ENCODE measurements at regions of chr1 and their contacts with region 1.

Region 1: GRCh38 chr1:177432897-177433296 is 262.1 kb downstream of the BRINP2 start:
- DNase-seq: no peak
- H3K4me3 ChIP-seq: no peak overlapping the region
- H3K27ac ChIP-seq: no peak overlapping the region
- H3K4me1 ChIP-seq: no peaks in the 10 kb centered on the region
- H3K27me3 ChIP-seq: no peaks in the 10 kb centered on the region
- CTCF ChIP-seq: no peak
- EP300 ChIP-seq: no peak
- POLR2A ChIP-seq: no peak

Region 2: DNA sequence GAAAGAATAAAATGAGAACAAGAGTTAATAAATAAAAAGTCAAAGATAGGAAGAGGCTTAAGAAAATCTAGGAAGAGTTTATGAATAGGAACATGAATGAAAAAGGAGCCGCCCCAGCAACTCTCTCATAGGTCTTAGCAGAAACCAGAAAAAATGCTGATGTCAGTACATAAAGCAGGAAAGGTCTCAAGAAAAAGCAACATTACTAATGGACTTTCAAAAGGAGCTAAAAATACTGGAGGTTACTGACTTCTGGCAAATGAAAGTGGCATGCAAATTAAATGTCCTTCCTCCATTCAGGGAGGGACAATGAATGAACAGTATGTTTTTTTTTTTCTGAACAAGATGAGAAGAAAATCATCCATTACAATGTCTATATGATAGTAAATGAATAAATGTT is 125.5 kb after region 1 on chr1:
- in situ Hi-C with region 1: no loop called
- intact Hi-C with region 1: no loop called
- DNase-seq: no peak
- H3K4me3 ChIP-seq: no peak overlapping the region
- H3K27ac ChIP-seq: no peak overlapping the region
- H3K4me1 ChIP-seq: no peaks in the 10 kb centered on the region
- H3K27me3 ChIP-seq: no peaks in the 10 kb centered on the region
- CTCF ChIP-seq: no peak
- EP300 ChIP-seq: no peak
- POLR2A ChIP-seq: no peak

Region 3: DNA sequence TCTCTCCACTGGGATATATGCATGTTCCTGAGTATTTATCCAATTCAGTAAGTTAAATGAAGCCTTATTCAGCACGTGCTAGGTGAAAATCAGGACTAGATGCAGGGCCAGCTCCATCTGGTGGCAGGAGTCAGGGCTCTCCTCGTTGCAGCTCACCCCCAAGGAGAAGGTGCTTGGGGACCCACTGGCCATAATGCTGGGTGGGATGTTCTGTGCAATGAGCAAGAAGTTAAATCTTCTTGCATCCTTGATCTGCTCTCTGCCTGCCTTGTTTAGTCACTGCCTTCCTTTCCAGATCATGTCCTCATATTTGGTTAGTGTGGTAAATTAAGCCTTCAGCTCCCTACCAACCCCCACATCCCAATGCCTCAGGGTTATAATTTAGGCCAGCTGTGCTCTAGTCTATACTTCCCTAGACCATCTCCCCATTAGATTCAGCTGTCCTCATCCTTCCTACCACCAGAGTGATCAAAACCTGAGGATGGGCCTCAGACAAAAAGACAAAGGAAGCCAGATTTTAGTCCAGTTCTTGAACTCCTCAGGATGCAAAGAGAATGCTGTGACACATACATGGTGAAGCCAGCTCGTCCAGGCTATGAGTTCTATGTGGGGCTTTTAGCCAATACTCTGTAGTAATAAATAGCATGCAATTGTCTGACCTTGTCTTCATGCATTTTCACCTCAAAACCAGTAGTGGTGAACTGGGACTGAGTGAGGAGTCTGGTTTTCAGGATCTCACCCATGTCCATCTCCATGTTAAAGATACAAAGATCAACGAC is 481.1 kb after region 1 on chr1:
- in situ Hi-C with region 1: loop called in 1 of 4 experiments (anchors 25 kb)
- intact Hi-C with region 1: no loop called
- DNase-seq: peak; percentile 39
- H3K4me3 ChIP-seq: no peak overlapping the region
- H3K27ac ChIP-seq: no peak overlapping the region
- H3K4me1 ChIP-seq: no peaks in the 10 kb centered on the region
- H3K27me3 ChIP-seq: peaks cover 4% of the 10 kb centered on the region
- CTCF ChIP-seq: peak; percentile 28 to 63 (median 48)
- EP300 ChIP-seq: no peak
- POLR2A ChIP-seq: no peak